Right ventricle myocardium inferior (tissue), 1 donor: ENCODE measurements at regions of chr5 and their contacts with region 1.

Region 1: GRCh38 chr5:60586307-60586901 is 113.6 kb downstream of the DEPDC1B start:
- DNase-seq: no peak
- ATAC-seq: no peak

Region 2: GRCh38 chr5:59317023-59317773 is 1269.2 kb before region 1 on chr5:
- intact Hi-C with region 1: no loop called
- DNase-seq: no peak
- ATAC-seq: peak; percentile 73

Region 3: GRCh38 chr5:59648949-59649921 is 937.2 kb before region 1 on chr5:
- intact Hi-C with region 1: no loop called
- DNase-seq: no peak
- ATAC-seq: peak; percentile 44

Region 4: DNA sequence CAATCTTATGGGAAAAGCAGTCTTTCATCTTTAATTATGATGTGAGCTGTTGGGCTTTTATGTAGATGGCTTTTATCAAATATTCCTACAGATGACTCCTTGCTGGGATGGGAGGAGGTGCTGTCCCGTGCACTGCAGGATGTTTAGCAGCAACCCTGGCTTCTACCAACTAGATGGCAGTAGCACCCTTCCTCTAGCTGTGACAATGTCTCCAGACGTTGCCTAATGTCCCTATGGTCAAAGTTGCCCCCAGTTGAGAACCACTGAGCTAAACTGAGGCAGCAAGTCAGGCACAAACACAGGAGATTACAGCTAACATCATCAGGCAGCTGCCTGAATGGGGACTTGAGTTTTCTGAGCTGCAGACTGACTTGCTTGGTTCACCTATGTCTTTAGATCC is 291.0 kb before region 1 on chr5:
- intact Hi-C with region 1: loop called (anchors 2 kb)
- DNase-seq: no peak
- ATAC-seq: peak; percentile 34